ENCODE measurements at regions of chr14 and their contacts with region 1.

Region 1: GRCh38 chr14:105368965-105369652 is 29.2 kb upstream of the TEX22 start:
- DNase-seq: no peak
- ATAC-seq: no peak
- H3K4me3 ChIP-seq: no peak overlapping the region
- H3K27ac ChIP-seq: no peak overlapping the region
- H3K4me1 ChIP-seq: peaks cover 5 to 7% of the 10 kb centered on the region in 2 experiments
- H3K27me3 ChIP-seq: no peaks in the 10 kb centered on the region
- CTCF ChIP-seq: no peak
- POLR2A ChIP-seq: no peak
- RAD21 ChIP-seq: no peak

Region 2: DNA sequence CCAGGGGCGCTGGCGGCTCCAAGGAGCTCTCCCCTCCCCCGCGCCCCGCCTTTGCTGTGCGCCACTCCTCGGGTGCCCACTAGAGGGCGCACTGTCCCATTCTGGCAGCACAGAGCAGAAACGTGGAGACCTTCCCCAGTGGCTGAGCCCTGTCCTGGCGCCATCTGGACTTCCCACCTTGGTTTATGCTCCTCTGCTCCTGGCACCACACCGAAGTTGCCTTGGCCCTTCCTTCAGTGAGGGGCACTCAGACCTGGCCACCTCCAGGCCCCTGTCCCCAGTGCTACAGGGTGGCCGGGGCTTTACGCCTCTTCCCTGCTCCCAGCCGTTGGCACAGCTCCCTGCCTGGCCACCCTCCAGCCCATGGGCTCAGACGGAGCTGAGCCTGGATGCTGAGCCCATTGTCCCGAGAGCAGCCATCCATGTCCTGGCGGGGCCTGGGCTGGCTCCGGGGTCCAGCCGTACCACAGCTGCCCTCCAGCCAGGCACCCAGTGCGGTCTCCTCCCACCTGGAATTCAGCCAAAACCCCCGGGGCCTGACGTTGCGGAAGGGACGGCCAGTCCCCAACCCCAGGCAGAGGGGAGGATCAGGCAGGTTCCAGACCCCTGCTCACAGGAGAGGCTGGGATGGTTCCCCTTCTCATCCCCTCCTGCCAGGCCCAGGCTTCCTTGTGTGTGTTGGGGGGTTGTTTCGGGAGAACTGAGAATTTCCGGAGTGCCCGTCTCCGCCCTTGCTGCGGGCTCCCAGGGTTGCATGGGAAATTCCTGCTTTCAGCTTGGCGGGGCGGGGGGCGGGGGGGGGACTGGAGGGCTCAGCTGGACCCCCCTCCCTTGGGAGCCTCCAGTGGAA is 112.1 kb after region 1 on chr14:
- CTCF ChIA-PET with region 1: interaction called, 19 read pairs
- POLR2A ChIA-PET with region 1: no interaction called
- RAD21 ChIA-PET with region 1: interaction called in 1 of 2 experiments, 6 read pairs
- intact Hi-C with region 1: no loop called
- DNase-seq: peak; percentile 55
- ATAC-seq: peak; percentile 80
- H3K4me3 ChIP-seq: peak overlapping the region; percentile 54 to 77
- H3K27ac ChIP-seq: peak overlapping the region; percentile 95
- H3K4me1 ChIP-seq: peaks cover 28 to 59% of the 10 kb centered on the region in 2 experiments
- H3K27me3 ChIP-seq: no peaks in the 10 kb centered on the region
- CTCF ChIP-seq: peak in 2 of 3 experiments; percentile 98 to 99; a peak in 4 of 6 replicates
- POLR2A ChIP-seq: peak; percentile 25
- RAD21 ChIP-seq: no peak

Region 3: DNA sequence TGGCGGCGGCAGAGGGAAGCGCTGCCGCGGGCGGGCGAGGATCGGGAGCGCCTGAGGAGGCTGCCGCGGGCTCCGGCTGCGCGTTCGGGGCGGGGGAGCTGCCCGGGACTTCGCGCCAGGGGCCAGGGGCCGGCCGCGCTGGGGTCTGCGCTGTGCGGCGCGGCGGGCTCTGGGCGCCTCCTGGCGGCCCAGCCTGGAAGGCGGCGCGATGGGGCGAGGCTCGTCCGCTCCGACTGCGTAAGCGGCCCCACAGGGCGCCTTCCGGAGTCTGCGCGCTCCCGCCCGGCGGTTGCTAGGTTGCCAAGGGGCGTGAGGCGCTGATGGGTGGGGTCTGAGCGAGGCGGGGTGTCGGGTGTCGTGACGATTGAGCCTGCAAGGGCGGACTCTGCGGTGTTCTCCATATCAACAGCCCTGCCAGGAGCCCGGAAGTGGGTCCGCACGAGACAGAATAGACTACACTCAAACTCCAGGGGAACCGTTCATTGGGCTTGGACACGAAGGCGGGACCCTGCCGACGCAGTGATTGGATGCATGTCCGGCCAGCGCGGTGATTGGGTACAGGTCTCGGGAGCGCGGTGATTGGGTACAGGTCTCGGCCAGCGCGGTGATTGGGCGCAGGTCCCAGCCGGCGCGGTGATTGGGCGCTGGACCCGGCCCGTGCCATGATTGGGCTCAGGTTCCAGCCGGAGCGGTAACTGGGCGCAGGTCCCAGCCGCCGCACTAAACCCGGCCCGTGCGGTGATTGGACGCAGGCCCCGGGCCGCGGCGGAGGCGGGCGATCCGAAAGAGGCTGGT is 121.7 kb after region 1 on chr14 and contains the start of gene TEDC1:
- CTCF ChIA-PET with region 1: interaction called, 77 read pairs
- POLR2A ChIA-PET with region 1: interaction called, 10 read pairs
- RAD21 ChIA-PET with region 1: interaction called, 4 to 8 read pairs
- intact Hi-C with region 1: loop called (anchors 1 kb)
- DNase-seq: peak; percentile 100
- ATAC-seq: peak; percentile 78
- H3K4me3 ChIP-seq: peak within 1 kb of the TSS; percentile 74 to 87
- H3K27ac ChIP-seq: peak within 1 kb of the TSS; percentile 100
- H3K4me1 ChIP-seq: peaks cover 20 to 49% of the 10 kb centered on the region in 2 experiments
- H3K27me3 ChIP-seq: no peaks in the 10 kb centered on the region
- CTCF ChIP-seq: peak in 2 of 3 experiments; percentile 50 to 71; a peak in 4 of 6 replicates
- POLR2A ChIP-seq: peak; percentile 70
- RAD21 ChIP-seq: no peak
- total RNA-seq, gene TEDC1: 40.4 TPM

Measured in HCT116 (cell line).